Activated T-helper 1 cell treated with anti-CD3 and anti-CD28 coated beads, Interleukin-12 subunit alpha, Interleukin-12 subunit beta, Interleukin-2, Interleukin-4 antibody, amounts not matched to agents 30 ng/mL and 10 ng/mL and 1 ng/mL, durations not matched to agents 14 hours and 24 hours and 36 hours (primary cell): ENCODE measurements at regions of chr6 and their contacts with region 1.

Region 1: GRCh38 chr6:106163446-106163965 is 77.4 kb downstream of the PRDM1 start:
- DNase-seq: peak; percentile 49
- H3K4me3 Mint-ChIP-seq: peak overlapping the region; percentile 69
- H3K27ac Mint-ChIP-seq: peak overlapping the region; percentile 98
- H3K4me1 Mint-ChIP-seq: peaks cover 73% of the 10 kb centered on the region
- H3K27me3 Mint-ChIP-seq: peaks cover 3% of the 10 kb centered on the region

Region 2: DNA sequence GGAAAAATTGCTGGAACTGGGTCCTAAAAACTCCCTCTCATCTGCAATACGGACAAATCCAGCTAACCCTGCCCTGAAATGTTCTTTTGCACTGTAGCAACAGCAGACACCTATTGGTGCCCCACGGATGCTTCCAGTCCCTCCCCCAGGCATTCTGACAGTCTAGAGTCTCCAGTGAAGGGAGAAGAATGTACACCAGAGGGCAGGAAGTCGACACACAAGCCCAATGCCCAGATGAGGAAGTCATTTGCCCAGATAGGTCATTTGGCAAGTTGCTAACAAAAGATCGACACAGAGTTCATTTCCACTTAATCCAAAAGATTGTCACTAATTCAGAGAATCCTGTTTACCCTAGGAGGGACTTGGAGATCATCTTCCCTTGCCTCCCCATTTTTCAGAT is 370.4 kb before region 1 on chr6:
- intact Hi-C with region 1: loop called (anchors 5 kb)
- DNase-seq: no peak
- H3K4me3 Mint-ChIP-seq: peak overlapping the region; percentile 5
- H3K27ac Mint-ChIP-seq: peak overlapping the region; percentile 66
- H3K4me1 Mint-ChIP-seq: peaks cover 86% of the 10 kb centered on the region
- H3K27me3 Mint-ChIP-seq: no peaks in the 10 kb centered on the region

Region 3: GRCh38 chr6:106085984-106086813 is 77.3 kb before region 1 on chr6 and contains the start of gene PRDM1:
- intact Hi-C with region 1: loop called (anchors 1 kb)
- DNase-seq: peak; percentile 83
- H3K4me3 Mint-ChIP-seq: peak within 1 kb of the TSS; percentile 96
- H3K27ac Mint-ChIP-seq: peak within 1 kb of the TSS; percentile 80
- H3K4me1 Mint-ChIP-seq: peaks cover 86% of the 10 kb centered on the region
- H3K27me3 Mint-ChIP-seq: peaks cover 7% of the 10 kb centered on the region
- total RNA-seq, gene PRDM1: 74.1 and 78.8 TPM in 2 replicates

Region 4: DNA sequence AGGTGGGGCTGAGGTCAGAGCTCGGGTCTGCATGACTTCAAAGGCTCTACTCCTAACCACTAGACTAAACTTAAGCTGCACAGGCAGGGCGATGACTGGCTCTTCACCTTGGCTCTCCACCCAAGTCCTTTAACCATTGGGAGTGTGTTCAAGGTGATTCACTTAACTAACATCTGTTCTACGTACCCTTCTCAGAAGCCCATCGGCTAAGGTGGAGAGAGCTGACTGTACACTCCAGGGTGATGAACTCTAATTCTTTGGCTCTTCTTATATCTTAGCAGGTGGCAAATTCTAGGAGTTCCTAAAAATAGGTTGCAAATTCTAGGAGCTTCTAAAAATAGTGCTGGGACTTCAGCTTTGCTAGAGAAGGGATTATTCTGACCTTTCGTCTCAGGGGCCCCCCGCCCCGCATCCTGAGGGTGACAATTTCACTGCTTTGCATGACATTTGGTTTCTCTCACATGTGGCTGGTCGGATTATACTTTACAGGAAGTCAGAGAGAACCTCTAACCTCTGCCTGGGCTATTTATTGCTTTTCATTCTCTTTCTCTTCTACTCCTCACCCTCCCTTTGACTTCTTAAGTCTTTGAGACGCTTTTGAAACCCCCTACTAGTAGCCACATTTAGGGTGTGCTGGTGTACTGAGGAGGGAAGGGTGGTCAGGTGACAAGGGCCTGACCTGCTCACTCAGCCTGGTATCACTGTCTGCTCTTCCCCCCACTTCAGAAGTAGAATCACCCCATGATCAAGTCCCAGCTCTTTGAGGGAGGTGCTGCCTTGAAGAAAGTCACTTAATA is 21.9 kb before region 1 on chr6:
- intact Hi-C with region 1: loop called (anchors 1 kb)
- DNase-seq: peak; percentile 51
- H3K4me3 Mint-ChIP-seq: peak overlapping the region; percentile 59
- H3K27ac Mint-ChIP-seq: peak overlapping the region; percentile 90
- H3K4me1 Mint-ChIP-seq: peaks cover 70% of the 10 kb centered on the region
- H3K27me3 Mint-ChIP-seq: no peaks in the 10 kb centered on the region

Region 5: GRCh38 chr6:106223300-106223930 is 59.9 kb after region 1 on chr6:
- intact Hi-C with region 1: loop called (anchors 1 kb)
- DNase-seq: peak; percentile 54
- H3K4me3 Mint-ChIP-seq: no peak overlapping the region
- H3K27ac Mint-ChIP-seq: no peak overlapping the region
- H3K4me1 Mint-ChIP-seq: peaks cover 59% of the 10 kb centered on the region
- H3K27me3 Mint-ChIP-seq: no peaks in the 10 kb centered on the region

Region 6: DNA sequence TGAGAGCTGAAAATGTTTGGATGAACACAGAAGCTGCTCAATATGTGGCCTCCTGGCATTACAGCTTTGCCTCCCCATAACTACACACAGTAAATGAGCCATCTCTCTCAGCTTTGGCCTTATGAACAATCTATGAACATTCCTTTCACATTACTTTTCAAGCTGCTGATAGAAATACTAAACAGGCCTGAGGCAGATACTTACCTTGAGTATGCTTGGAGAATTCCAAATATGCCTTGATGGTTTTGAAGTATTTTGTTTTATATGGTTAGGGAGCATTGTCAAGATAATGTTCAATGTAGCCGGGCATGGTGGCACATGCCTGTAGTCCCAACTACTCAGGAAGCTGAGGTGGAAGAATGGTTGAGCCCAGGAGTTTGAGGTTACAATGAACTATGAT is 706.6 kb after region 1 on chr6:
- intact Hi-C with region 1: no loop called
- DNase-seq: no peak
- H3K4me3 Mint-ChIP-seq: no peak overlapping the region
- H3K27ac Mint-ChIP-seq: no peak overlapping the region
- H3K4me1 Mint-ChIP-seq: no peaks in the 10 kb centered on the region
- H3K27me3 Mint-ChIP-seq: peaks cover 4% of the 10 kb centered on the region